ENCODE measurements at regions of chr13 and their contacts with region 1.

Region 1: DNA sequence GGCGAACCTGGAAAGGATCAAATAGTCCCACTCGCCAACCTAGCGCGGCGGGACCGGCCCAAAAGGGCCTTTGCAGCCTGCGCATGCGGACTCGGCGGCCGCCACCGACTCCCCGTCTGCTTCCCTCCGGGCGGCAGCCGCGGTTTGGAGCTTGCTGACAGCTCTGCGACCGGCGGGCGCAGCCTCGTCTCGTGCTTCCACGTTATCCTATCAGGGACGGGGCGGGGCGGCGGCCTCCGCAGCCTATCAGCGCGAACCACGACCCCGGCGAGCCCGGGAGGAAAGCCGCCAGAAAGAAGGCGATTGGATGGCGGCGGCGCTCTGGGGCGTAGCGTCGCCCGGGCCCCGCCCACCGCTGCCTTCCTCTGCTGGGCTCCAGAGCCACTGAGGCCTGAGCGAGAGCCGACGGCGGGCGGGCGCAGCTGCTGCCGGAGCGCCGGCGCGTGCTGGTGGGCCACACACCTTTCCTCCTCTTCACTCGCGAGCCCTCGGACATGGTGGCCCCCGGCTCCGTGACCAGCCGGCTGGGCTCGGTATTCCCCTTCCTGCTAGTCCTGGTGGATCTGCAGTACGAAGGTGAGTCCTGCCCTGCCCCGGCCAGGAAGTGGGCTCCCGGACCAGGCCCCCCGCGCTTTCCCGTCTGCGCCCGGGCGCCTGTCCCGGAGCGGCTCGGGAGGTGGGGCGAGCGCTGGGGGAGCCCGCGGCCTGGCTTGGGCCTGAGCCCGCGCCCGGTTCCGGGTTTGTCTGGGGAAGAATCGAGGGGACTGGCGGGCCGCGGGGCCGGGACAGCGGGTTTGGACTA is at the start of gene DNAJC3:
- DNase-seq: peak; percentile 99
- H3K4me3 ChIP-seq: peak within 1 kb of the TSS; percentile 82
- H3K4me3 Mint-ChIP-seq: peak within 1 kb of the TSS; percentile 89
- H3K27ac Mint-ChIP-seq: peak within 1 kb of the TSS; percentile 95
- H3K4me1 ChIP-seq: peaks cover 17% of the 10 kb centered on the region; the same call in 1 of the 2 replicates
- H3K4me1 Mint-ChIP-seq: peaks cover 27% of the 10 kb centered on the region
- H3K27me3 ChIP-seq: no peaks in the 10 kb centered on the region
- H3K27me3 Mint-ChIP-seq: no peaks in the 10 kb centered on the region
- CTCF ChIP-seq: no peak
- total RNA-seq, gene DNAJC3: 36.8 and 38.0 TPM in 2 replicates

Region 2: DNA sequence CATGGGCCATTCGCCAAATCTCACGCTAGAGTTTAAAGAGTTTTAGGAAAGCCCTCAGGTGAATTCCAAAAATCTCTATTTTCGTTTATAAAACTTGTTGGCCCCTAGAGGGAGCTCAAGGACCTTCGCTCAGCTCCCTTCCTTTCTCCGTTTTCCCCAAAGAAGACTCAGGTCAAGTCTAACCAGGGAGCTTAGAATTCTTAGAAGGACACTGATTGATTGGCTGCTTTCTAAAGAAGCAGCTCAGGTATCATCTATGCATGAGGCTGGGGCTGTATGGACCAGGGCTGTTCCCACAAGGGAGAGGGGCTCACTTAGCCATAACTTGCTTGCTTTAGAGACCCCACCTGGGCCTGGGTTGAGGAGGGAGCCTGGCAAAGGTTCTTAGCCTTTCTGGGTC is 52.9 kb before region 1 on chr13:
- CTCF ChIA-PET with region 1: interaction called, 13 read pairs
- POLR2A ChIA-PET with region 1: interaction called, 5 read pairs
- intact Hi-C with region 1: no loop called
- DNase-seq: peak in 1 of 2 experiments; percentile 68
- H3K4me3 ChIP-seq: no peak overlapping the region
- H3K4me3 Mint-ChIP-seq: no peak overlapping the region
- H3K27ac Mint-ChIP-seq: no peak overlapping the region
- H3K4me1 ChIP-seq: no peaks in the 10 kb centered on the region
- H3K4me1 Mint-ChIP-seq: no peaks in the 10 kb centered on the region
- H3K27me3 ChIP-seq: no peaks in the 10 kb centered on the region
- H3K27me3 Mint-ChIP-seq: no peaks in the 10 kb centered on the region
- CTCF ChIP-seq: peak; percentile 75 to 82

Region 3: GRCh38 chr13:96053011-96053703 is 376.2 kb after region 1 on chr13 and contains the start of gene UGGT2:
- CTCF ChIA-PET with region 1: no interaction called
- POLR2A ChIA-PET with region 1: interaction called, 3 read pairs
- intact Hi-C with region 1: loop called (anchors 5 kb)
- DNase-seq: peak; percentile 96 to 97
- H3K4me3 ChIP-seq: peak within 1 kb of the TSS; percentile 100
- H3K4me3 Mint-ChIP-seq: peak within 1 kb of the TSS; percentile 87
- H3K27ac Mint-ChIP-seq: peak within 1 kb of the TSS; percentile 88
- H3K4me1 ChIP-seq: no peaks in the 10 kb centered on the region
- H3K4me1 Mint-ChIP-seq: no peaks in the 10 kb centered on the region
- H3K27me3 ChIP-seq: no peaks in the 10 kb centered on the region
- H3K27me3 Mint-ChIP-seq: peaks cover 2% of the 10 kb centered on the region
- CTCF ChIP-seq: no peak
- total RNA-seq, gene UGGT2: 35.5 and 42.0 TPM in 2 replicates

Region 4: GRCh38 chr13:96684469-96684868 is 1007.5 kb after region 1 on chr13:
- CTCF ChIA-PET with region 1: no interaction called
- POLR2A ChIA-PET with region 1: no interaction called
- intact Hi-C with region 1: no loop called
- DNase-seq: no peak
- H3K4me3 ChIP-seq: no peak overlapping the region
- H3K4me3 Mint-ChIP-seq: no peak overlapping the region
- H3K27ac Mint-ChIP-seq: no peak overlapping the region
- H3K4me1 ChIP-seq: no peaks in the 10 kb centered on the region
- H3K4me1 Mint-ChIP-seq: no peaks in the 10 kb centered on the region
- H3K27me3 ChIP-seq: no peaks in the 10 kb centered on the region
- H3K27me3 Mint-ChIP-seq: peaks cover 6% of the 10 kb centered on the region
- CTCF ChIP-seq: no peak